Activated naive CD8-positive, alpha-beta T cell treated with anti-CD3 and anti-CD28 coated beads, Interleukin-2, amount 10 ng/mL, durations not matched to agents 7 days and 5 days (primary cell): ENCODE measurements at regions of chr15 and their contacts with region 1.

Region 1: DNA sequence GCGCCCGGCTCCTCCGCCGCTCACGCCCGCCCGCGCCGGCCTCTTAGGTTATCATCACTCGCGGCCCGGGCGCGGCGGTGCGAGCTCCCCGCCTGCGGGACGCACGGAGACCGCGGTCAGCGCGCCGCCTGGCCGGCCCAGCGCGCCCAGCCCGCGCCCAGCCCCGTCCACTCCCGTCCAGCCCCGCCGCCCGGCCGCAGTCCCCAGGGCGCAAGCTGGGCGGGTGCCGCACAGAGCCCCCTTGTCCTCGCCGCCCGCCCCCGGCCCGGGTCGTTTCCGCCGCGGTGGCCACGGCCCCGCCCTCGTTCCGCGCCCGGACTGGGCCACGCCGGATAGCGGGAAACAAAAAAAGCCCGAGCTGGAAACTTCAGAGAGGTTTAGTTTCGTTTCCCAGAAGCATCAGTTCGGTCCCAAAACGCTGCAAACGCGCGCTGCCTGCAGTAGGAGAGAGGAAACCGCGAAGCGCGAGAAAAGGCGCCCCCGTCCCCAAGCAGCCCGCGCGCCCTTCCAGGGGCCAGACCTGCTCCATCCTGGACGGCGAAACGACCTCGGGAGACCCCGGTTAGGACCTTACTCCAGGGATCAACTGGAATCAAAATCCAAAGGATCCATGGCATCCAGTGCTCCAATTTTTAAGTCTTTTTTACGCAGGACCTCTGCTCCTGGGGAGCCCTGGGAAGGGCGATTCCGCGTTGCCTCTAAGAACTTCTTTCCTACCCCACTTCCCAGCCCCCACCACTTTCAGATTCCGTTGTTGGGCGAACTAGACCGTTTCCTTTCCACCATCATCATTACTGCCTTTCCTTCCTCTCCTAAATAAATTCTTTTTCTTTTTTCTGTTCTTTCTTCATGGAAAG is at the start of gene ATP10A:
- DNase-seq: peak; percentile 74
- ATAC-seq: peak; percentile 19
- H3K4me3 Mint-ChIP-seq: peak within 1 kb of the TSS; percentile 97
- H3K27ac Mint-ChIP-seq: peak within 1 kb of the TSS; percentile 94
- H3K4me1 Mint-ChIP-seq: peaks cover 28% of the 10 kb centered on the region
- H3K27me3 Mint-ChIP-seq: peaks cover 3% of the 10 kb centered on the region
- total RNA-seq, gene ATP10A: 57.9 to 60.3 TPM

Region 2: GRCh38 chr15:25811481-25811906 is 51.8 kb before region 1 on chr15:
- POLR2A ChIA-PET with region 1: interaction called, 30 read pairs
- DNase-seq: peak; percentile 47
- ATAC-seq: peak; percentile 71
- H3K4me3 Mint-ChIP-seq: peak overlapping the region; percentile 80
- H3K27ac Mint-ChIP-seq: peak overlapping the region; percentile 68
- H3K4me1 Mint-ChIP-seq: peaks cover 65% of the 10 kb centered on the region
- H3K27me3 Mint-ChIP-seq: no peaks in the 10 kb centered on the region

Region 3: GRCh38 chr15:25850154-25851111 is 12.9 kb before region 1 on chr15:
- POLR2A ChIA-PET with region 1: interaction called, 79 read pairs
- DNase-seq: peak; percentile 78
- ATAC-seq: peak; percentile 64
- H3K4me3 Mint-ChIP-seq: peak overlapping the region; percentile 96
- H3K27ac Mint-ChIP-seq: peak overlapping the region; percentile 99
- H3K4me1 Mint-ChIP-seq: peaks cover 83% of the 10 kb centered on the region
- H3K27me3 Mint-ChIP-seq: no peaks in the 10 kb centered on the region

Region 4: DNA sequence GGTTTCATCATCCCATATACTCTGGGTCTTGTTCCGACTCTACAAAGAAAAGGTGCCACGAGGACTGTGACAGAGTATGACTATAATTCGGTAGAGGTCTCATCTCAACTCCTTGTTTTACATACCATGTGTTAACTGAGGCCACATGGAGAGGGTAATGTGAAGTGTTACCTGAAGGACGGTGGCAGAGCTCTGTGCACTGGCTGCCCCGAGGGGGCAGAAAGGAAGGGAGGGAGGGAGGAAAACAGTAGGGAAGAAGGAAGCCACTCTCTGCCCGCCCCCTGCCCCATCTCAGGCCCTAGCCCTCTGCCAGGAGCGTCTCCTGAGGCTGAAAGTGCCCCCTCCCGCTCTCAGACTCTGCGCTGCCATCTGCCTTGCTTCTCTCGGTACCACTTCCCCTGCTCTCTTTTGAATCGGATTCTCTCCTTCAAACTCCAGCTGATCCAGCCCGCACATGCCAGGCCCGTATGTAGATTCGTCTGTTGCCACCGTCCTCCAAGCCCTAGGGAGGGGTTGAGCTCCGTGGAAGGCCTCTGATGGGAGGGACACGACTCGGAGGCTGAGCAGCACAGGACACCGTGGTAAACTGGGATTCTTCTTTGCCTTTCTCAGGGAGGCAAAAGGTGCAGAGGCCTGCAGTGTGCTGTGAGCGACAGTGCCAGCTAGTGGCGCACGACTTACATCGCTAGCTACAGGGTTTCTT is 70.3 kb after region 1 on chr15:
- POLR2A ChIA-PET with region 1: interaction called, 11 read pairs
- DNase-seq: peak; percentile 74
- ATAC-seq: peak; percentile 99
- H3K4me3 Mint-ChIP-seq: peak overlapping the region; percentile 91
- H3K27ac Mint-ChIP-seq: peak overlapping the region; percentile 79
- H3K4me1 Mint-ChIP-seq: peaks cover 8% of the 10 kb centered on the region
- H3K27me3 Mint-ChIP-seq: peaks cover 12% of the 10 kb centered on the region